ENCODE measurements at regions of chr2 and their contacts with region 1.

Region 1: DNA sequence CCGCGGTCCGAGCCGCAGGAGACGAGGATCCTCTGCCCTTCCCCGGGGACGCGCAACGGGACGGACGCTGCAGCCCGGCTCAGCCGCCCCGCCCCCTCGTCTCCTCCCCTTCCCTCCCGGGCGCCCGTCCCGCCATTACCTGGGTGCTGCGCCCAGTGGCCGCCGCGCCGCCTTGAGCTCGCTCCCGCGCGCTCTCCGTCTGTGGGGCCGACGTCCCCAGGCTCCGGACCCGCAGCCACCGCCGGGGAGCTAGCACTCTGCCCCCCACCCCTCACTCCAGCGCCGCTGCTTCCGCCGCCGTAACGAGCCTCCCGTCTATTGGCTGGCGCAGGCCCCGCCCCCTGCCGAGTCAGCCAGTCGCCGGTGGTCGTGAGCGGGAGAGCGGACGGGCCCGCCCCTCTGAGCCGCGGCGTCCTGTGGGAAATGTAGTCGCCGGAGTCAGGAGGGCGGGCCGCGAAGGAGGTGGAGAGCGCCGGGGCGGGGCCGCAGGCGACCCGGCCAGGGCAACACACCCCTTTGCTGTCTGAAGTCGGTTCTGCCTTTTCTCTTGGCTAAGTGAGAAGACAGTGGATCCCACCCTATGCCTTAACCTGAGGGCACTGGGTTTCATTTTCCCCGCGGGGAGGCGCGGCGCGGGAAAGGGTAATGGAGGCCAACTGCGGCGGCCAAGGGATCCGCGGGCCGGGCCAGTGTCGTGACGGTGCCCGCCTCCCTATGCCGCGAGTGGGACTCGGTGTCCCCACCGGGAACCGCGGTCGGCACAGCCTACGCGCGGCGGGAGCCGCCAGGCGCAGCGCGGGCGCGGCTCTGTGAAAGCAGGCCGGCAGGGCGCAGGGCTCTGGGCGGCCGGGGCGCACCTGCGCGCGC is at the start of gene SAP130:
- DNase-seq: peak; percentile 99
- ATAC-seq: peak; percentile 83
- H3K4me3 Mint-ChIP-seq: peak within 1 kb of the TSS; percentile 93
- H3K27ac Mint-ChIP-seq: peak within 1 kb of the TSS; percentile 70
- H3K4me1 Mint-ChIP-seq: peaks cover 13% of the 10 kb centered on the region
- H3K27me3 Mint-ChIP-seq: no peaks in the 10 kb centered on the region
- total RNA-seq, gene SAP130: 28.2 to 35.8 TPM

Region 2: DNA sequence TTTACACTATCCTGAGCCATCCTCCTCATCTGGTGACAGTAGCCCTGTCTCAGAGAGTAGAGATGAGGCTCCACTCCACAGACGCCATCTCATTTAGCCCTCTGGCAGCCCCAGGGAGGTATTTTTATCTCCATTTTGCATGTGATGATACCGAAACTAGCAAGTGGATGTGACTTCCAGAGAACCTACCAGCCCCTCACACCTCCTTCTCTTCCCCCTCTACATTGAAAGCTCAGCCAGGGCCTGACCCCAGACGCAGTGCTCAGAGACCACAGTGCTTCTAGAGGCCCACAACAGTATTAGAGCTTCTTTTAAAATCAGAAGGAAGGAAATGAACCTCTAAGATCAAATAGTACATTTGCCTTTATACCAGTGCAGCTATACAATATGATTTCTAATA is 1363.8 kb before region 1 on chr2:
- CTCF ChIA-PET with region 1: no interaction called
- POLR2A ChIA-PET with region 1: no interaction called
- intact Hi-C with region 1: loop called (anchors 10 kb)
- DNase-seq: peak; percentile 45
- ATAC-seq: peak; percentile 49
- H3K4me3 Mint-ChIP-seq: peak overlapping the region; percentile 49
- H3K27ac Mint-ChIP-seq: peak overlapping the region; percentile 91
- H3K4me1 Mint-ChIP-seq: peaks cover 92% of the 10 kb centered on the region
- H3K27me3 Mint-ChIP-seq: no peaks in the 10 kb centered on the region

Region 3: GRCh38 chr2:127640082-127641072 is 387.7 kb before region 1 on chr2:
- CTCF ChIA-PET with region 1: no interaction called
- POLR2A ChIA-PET with region 1: no interaction called
- intact Hi-C with region 1: loop called in 1 of 2 experiments (anchors 5 kb)
- DNase-seq: peak; percentile 72
- ATAC-seq: peak; percentile 47
- H3K4me3 Mint-ChIP-seq: peak overlapping the region; percentile 63
- H3K27ac Mint-ChIP-seq: peak overlapping the region; percentile 67
- H3K4me1 Mint-ChIP-seq: peaks cover 59% of the 10 kb centered on the region
- H3K27me3 Mint-ChIP-seq: no peaks in the 10 kb centered on the region

Region 4: DNA sequence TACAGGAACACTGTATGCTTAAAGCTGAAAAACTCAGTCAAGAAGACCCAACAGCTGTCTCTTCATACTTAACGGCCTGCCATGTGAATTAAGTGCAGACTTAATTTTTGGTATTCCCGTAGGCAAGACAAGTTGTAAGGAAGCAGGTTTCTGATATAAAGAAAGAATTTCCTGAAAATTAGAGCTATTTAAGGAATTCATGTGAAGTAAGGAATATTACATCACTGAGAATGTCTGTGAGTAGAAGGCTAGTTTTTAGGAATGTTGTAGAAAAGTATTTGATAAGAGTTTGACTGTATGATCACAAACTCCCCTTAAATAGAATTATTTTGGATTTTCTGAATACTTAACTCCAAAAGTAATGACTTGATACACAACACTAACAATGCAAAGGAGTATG is 268.1 kb before region 1 on chr2:
- CTCF ChIA-PET with region 1: no interaction called
- POLR2A ChIA-PET with region 1: no interaction called
- intact Hi-C with region 1: no loop called
- DNase-seq: no peak
- ATAC-seq: no peak
- H3K4me3 Mint-ChIP-seq: no peak overlapping the region
- H3K27ac Mint-ChIP-seq: no peak overlapping the region
- H3K4me1 Mint-ChIP-seq: peaks cover 16% of the 10 kb centered on the region
- H3K27me3 Mint-ChIP-seq: no peaks in the 10 kb centered on the region

Region 5: GRCh38 chr2:127857265-127857808 is 170.7 kb before region 1 on chr2:
- CTCF ChIA-PET with region 1: no interaction called
- POLR2A ChIA-PET with region 1: no interaction called
- intact Hi-C with region 1: loop called in 1 of 2 experiments (anchors 1 kb)
- DNase-seq: peak; percentile 39
- ATAC-seq: no peak
- H3K4me3 Mint-ChIP-seq: peak overlapping the region; percentile 97
- H3K27ac Mint-ChIP-seq: peak overlapping the region; percentile 96
- H3K4me1 Mint-ChIP-seq: peaks cover 50% of the 10 kb centered on the region
- H3K27me3 Mint-ChIP-seq: no peaks in the 10 kb centered on the region

Region 6: DNA sequence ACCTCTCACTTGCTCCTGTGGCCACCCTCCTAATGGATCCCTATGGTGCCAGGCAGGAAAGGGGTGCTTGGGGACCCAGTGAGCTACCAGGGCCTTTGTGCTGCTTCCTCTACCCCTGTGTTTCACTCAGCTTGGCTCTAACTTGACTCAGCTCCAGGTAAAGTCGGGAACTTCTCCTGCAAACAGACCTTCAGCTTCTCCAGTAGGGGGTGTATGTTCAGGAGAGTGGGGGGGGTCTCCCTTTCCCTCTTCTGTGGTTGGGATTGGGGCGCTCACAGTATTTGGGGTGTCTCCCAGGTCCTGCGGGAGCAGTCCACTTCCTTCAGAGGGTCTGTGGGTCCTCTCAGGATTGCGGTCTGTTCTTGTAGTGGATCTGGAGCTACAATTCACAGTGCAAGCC is 26.1 kb after region 1 on chr2:
- CTCF ChIA-PET with region 1: no interaction called
- POLR2A ChIA-PET with region 1: no interaction called
- intact Hi-C with region 1: no loop called
- DNase-seq: no peak
- ATAC-seq: no peak
- H3K4me3 Mint-ChIP-seq: no peak overlapping the region
- H3K27ac Mint-ChIP-seq: no peak overlapping the region
- H3K4me1 Mint-ChIP-seq: no peaks in the 10 kb centered on the region
- H3K27me3 Mint-ChIP-seq: peaks cover 23% of the 10 kb centered on the region

Region 7: GRCh38 chr2:128232965-128233789 is 205.1 kb after region 1 on chr2:
- CTCF ChIA-PET with region 1: no interaction called
- POLR2A ChIA-PET with region 1: no interaction called
- intact Hi-C with region 1: loop called in 1 of 2 experiments (anchors 1 kb)
- DNase-seq: peak; percentile 94
- ATAC-seq: peak; percentile 98
- H3K4me3 Mint-ChIP-seq: peak overlapping the region; percentile 67
- H3K27ac Mint-ChIP-seq: no peak overlapping the region
- H3K4me1 Mint-ChIP-seq: peaks cover 2% of the 10 kb centered on the region
- H3K27me3 Mint-ChIP-seq: peaks cover 3% of the 10 kb centered on the region

Measured in activated CD4-positive, alpha-beta T cell treated with anti-CD3 and anti-CD28 coated beads for 36 hours (primary cell).